ENCODE measurements at regions of chr7 and their contacts with region 1.

Region 1: DNA sequence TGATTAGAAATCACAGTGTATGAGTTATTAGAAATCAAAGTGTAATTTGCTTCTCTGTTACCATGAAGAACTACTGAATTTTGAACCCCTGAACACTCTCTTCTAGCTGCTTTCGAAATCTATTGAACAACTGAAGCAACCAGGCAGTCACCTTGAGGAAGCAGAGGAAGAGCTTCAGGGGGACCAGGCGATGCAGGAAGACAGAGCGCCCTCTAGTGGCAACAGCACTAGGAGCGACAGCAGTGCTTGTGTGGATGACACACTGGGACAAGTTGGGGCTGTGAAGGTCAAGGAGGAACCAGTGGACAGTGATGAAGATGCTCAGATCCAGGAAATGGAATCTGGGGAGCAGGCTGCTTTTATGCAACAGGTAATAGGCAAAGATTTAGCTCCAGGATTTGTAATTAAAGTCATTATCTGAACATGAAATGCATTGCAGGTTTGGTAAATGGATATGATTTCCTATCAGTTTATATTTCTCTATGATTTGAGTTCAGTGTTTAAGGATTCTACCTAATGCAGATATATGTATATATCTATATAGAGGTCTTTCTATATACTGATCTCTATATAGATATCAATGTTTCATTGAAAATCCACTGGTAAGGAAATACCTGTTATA is 170.7 kb downstream of the HDAC9 start:
- DNase-seq: peak; percentile 16
- ATAC-seq: peak; percentile 100
- H3K4me3 ChIP-seq: no peak overlapping the region
- H3K27ac ChIP-seq: no peak overlapping the region
- H3K4me1 ChIP-seq: no peaks in the 10 kb centered on the region
- H3K27me3 ChIP-seq: no peaks in the 10 kb centered on the region
- CTCF ChIP-seq: peak; percentile 92 to 98 (median 97)
- EP300 ChIP-seq: no peak
- POLR2A ChIP-seq: no peak
- RAD21 ChIP-seq: peak; percentile 76

Region 2: DNA sequence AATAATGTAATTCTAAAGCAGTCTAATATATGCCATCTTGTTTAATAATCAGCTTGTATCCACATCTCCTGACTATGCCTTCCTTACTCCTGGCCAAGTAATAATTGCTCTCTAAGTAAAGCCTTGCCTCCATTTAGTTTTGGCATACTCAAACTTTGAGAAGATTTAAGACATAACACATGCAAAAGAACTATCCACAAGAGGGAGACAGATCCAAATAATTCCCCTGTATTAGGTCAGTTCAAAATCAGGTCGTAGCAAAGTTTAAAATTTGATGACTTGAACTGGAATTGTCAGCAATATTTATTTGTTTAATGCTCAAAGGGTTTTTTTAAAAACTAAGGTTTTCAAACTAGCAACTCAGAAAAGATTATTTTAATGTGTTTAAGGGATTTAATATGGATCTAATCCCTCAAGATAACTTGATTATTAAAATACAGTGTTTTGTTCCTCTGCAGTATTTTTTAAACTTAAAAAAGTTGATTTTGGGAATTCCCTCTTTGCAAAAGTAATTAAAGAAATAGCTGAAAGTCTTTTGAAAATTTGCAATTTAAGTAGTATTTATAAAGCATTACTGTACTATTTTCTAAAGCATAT is 75.4 kb before region 1 on chr7:
- CTCF ChIA-PET with region 1: interaction called, 10 read pairs
- POLR2A ChIA-PET with region 1: no interaction called
- RAD21 ChIA-PET with region 1: interaction called, 3 read pairs
- SMC1A ChIA-PET with region 1: interaction called, 3 read pairs
- in situ Hi-C with region 1: no loop called
- intact Hi-C with region 1: loop called (anchors 2 kb)
- DNase-seq: no peak
- ATAC-seq: peak; percentile 69
- H3K4me3 ChIP-seq: no peak overlapping the region
- H3K27ac ChIP-seq: no peak overlapping the region
- H3K4me1 ChIP-seq: no peaks in the 10 kb centered on the region
- H3K27me3 ChIP-seq: no peaks in the 10 kb centered on the region
- CTCF ChIP-seq: peak; percentile 22 to 39 (median 30); a peak in 3 of 6 replicates
- EP300 ChIP-seq: no peak
- POLR2A ChIP-seq: no peak
- RAD21 ChIP-seq: peak; percentile 53

Region 3: GRCh38 chr7:18655912-18656311 is 10.3 kb before region 1 on chr7:
- CTCF ChIA-PET with region 1: interaction called, 16 read pairs
- POLR2A ChIA-PET with region 1: no interaction called
- RAD21 ChIA-PET with region 1: no interaction called
- SMC1A ChIA-PET with region 1: interaction called, 8 read pairs
- in situ Hi-C with region 1: no loop called
- intact Hi-C with region 1: no loop called
- DNase-seq: no peak
- ATAC-seq: no peak
- H3K4me3 ChIP-seq: no peak overlapping the region
- H3K27ac ChIP-seq: no peak overlapping the region
- H3K4me1 ChIP-seq: no peaks in the 10 kb centered on the region
- H3K27me3 ChIP-seq: no peaks in the 10 kb centered on the region
- CTCF ChIP-seq: no peak
- EP300 ChIP-seq: no peak
- POLR2A ChIP-seq: no peak
- RAD21 ChIP-seq: no peak

Region 4: GRCh38 chr7:18792871-18793595 is 126.8 kb after region 1 on chr7:
- CTCF ChIA-PET with region 1: interaction called, 4 read pairs
- POLR2A ChIA-PET with region 1: interaction called, 11 read pairs
- RAD21 ChIA-PET with region 1: no interaction called
- SMC1A ChIA-PET with region 1: no interaction called
- in situ Hi-C with region 1: no loop called
- intact Hi-C with region 1: no loop called
- DNase-seq: no peak
- ATAC-seq: no peak
- H3K4me3 ChIP-seq: no peak overlapping the region
- H3K27ac ChIP-seq: no peak overlapping the region
- H3K4me1 ChIP-seq: no peaks in the 10 kb centered on the region
- H3K27me3 ChIP-seq: no peaks in the 10 kb centered on the region
- CTCF ChIP-seq: no peak
- EP300 ChIP-seq: no peak
- POLR2A ChIP-seq: no peak
- RAD21 ChIP-seq: no peak